PC-9 (cell line): ENCODE measurements at regions of chr9 and their contacts with region 1.

Region 1: GRCh38 chr9:73061146-73061545 is 90.5 kb upstream of the ANXA1 start:
- DNase-seq: no peak
- H3K4me3 ChIP-seq: no peak overlapping the region
- H3K27ac ChIP-seq: no peak overlapping the region
- H3K4me1 ChIP-seq: no peaks in the 10 kb centered on the region
- H3K27me3 ChIP-seq: no peaks in the 10 kb centered on the region
- CTCF ChIP-seq: no peak

Region 2: GRCh38 chr9:73583576-73583975 is 522.4 kb after region 1 on chr9:
- CTCF ChIA-PET with region 1: no interaction called
- POLR2A ChIA-PET with region 1: no interaction called
- intact Hi-C with region 1: loop called (anchors 5 kb)
- DNase-seq: no peak
- H3K4me3 ChIP-seq: no peak overlapping the region
- H3K27ac ChIP-seq: no peak overlapping the region
- H3K4me1 ChIP-seq: no peaks in the 10 kb centered on the region
- H3K27me3 ChIP-seq: no peaks in the 10 kb centered on the region
- CTCF ChIP-seq: no peak